ENCODE measurements at regions of chr7 and their contacts with region 1.

Region 1: DNA sequence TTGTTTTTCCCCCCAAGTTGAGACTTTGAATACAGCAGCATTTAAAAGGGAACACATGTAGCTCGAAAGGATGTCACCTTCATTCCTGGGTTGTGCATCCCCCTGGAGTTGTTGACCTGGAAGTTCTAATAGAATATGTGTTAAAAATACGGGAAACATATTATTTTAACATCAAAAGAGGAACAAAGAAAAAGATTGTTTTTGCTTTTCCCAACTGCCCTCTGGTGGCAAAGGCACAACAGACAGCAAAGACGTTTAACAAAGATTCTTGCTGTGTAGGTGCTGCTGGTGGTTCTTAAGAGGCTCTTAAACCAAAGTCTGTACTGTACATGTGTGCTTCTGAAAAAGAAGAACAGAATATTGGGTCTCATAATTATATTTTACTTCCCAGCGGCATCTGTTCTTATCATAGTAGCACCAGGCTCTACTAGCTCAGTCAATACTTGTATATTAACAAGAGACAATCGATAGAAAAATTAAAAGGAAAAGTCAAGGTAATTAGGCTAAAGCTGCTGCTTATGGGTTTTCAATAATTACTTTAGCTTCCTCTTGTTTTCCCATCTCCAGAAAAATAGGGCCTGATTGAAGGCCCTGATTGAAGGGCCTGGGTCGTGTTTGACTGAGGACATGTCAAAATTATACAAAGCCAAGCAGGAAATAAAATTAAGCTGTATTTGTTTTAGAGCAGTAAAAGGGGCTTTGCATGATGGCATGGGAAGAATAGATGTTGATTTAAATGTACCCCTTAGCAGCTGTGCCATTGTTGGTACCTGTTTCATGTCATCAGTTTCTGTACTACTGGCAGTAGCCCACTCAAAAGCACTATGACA is 384.2 kb upstream of the LRGUK start:
- DNase-seq: peak; percentile 36
- H3K4me3 ChIP-seq: no peak overlapping the region
- H3K27ac ChIP-seq: peak overlapping the region; percentile 10 to 100; a peak in 3 of 4 replicates
- H3K4me1 ChIP-seq: peaks cover 14 to 80% of the 10 kb centered on the region in 2 experiments; a peak in 3 of 4 replicates
- H3K27me3 ChIP-seq: no peaks in the 10 kb centered on the region
- CTCF ChIP-seq: peak; percentile 95
- EP300 ChIP-seq: peak; percentile 49 to 89; a peak in 3 of 4 replicates
- RAD21 ChIP-seq: peak; percentile 95

Region 2: GRCh38 chr7:133668296-133669060 is 74.4 kb before region 1 on chr7:
- CTCF ChIA-PET with region 1: interaction called, 14 read pairs
- POLR2A ChIA-PET with region 1: no interaction called
- DNase-seq: no peak
- H3K4me3 ChIP-seq: no peak overlapping the region
- H3K27ac ChIP-seq: peak overlapping the region; percentile 39 to 94; a peak in 3 of 4 replicates
- H3K4me1 ChIP-seq: peaks cover 7 to 56% of the 10 kb centered on the region in 2 experiments; a peak in 3 of 4 replicates
- H3K27me3 ChIP-seq: no peaks in the 10 kb centered on the region
- CTCF ChIP-seq: no peak
- EP300 ChIP-seq: no peak
- RAD21 ChIP-seq: no peak

Region 3: GRCh38 chr7:133714654-133715053 is 28.3 kb before region 1 on chr7:
- CTCF ChIA-PET with region 1: interaction called, 19 read pairs
- POLR2A ChIA-PET with region 1: no interaction called
- DNase-seq: no peak
- H3K4me3 ChIP-seq: no peak overlapping the region
- H3K27ac ChIP-seq: no peak overlapping the region
- H3K4me1 ChIP-seq: peaks cover 0 to 4% of the 10 kb centered on the region in 2 experiments; a peak in 2 of 4 replicates
- H3K27me3 ChIP-seq: no peaks in the 10 kb centered on the region
- CTCF ChIP-seq: no peak
- EP300 ChIP-seq: no peak
- RAD21 ChIP-seq: no peak

Region 4: DNA sequence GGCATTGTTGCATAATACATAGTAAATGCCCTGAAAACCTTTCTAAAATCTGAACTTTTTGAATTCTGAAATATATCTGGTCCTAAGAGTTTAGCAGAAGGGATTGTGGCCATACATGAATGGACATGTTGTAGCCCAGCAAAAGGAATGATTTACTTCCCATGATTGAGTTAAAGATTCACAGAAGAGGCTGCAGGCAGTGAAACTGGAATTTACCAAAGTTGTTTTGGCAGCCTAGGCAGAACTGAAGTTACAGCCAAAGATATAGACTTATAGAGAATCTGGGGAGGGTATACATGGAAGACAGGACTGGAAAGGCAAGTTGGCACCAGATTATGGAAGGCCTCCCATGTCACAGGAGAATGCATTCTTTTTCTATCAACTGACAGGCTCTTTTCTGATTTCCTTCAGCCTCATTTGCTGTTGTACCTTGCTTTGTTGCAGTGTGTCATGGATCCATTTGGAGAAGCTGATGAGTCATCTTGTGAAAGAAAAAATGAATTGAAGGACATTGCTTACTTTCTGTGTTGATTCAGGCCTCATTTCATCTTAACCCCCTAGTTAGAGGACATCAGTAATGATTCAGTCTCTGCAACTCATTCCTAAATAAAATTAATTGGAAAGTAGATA is 28.1 kb after region 1 on chr7:
- CTCF ChIA-PET with region 1: interaction called, 37 read pairs
- POLR2A ChIA-PET with region 1: interaction called, 16 read pairs
- DNase-seq: no peak
- H3K4me3 ChIP-seq: no peak overlapping the region
- H3K27ac ChIP-seq: peak overlapping the region; percentile 67 to 100
- H3K4me1 ChIP-seq: peaks cover 12 to 74% of the 10 kb centered on the region in 2 experiments
- H3K27me3 ChIP-seq: no peaks in the 10 kb centered on the region
- CTCF ChIP-seq: no peak
- EP300 ChIP-seq: no peak
- RAD21 ChIP-seq: no peak

Region 5: GRCh38 chr7:133804127-133804526 is 61.2 kb after region 1 on chr7:
- CTCF ChIA-PET with region 1: interaction called, 80 read pairs
- POLR2A ChIA-PET with region 1: interaction called, 13 read pairs
- DNase-seq: no peak
- H3K4me3 ChIP-seq: no peak overlapping the region
- H3K27ac ChIP-seq: peak overlapping the region in 1 of 2 experiments; percentile 100; a peak in 2 of 4 replicates
- H3K4me1 ChIP-seq: peaks cover 0 to 45% of the 10 kb centered on the region in 2 experiments; a peak in 2 of 4 replicates
- H3K27me3 ChIP-seq: no peaks in the 10 kb centered on the region
- CTCF ChIP-seq: no peak
- EP300 ChIP-seq: no peak
- RAD21 ChIP-seq: no peak

Region 6: GRCh38 chr7:133983685-133984419 is 240.9 kb after region 1 on chr7:
- CTCF ChIA-PET with region 1: interaction called, 15 read pairs
- POLR2A ChIA-PET with region 1: no interaction called
- DNase-seq: peak; percentile 72
- H3K4me3 ChIP-seq: no peak overlapping the region
- H3K27ac ChIP-seq: peak overlapping the region in 1 of 2 experiments; percentile 100; a peak in 2 of 4 replicates
- H3K4me1 ChIP-seq: peaks cover 0 to 29% of the 10 kb centered on the region in 2 experiments; a peak in 2 of 4 replicates
- H3K27me3 ChIP-seq: no peaks in the 10 kb centered on the region
- CTCF ChIP-seq: no peak
- EP300 ChIP-seq: peak in 1 of 2 experiments; percentile 72; a peak in 2 of 4 replicates
- RAD21 ChIP-seq: peak; percentile 63

Region 7: GRCh38 chr7:133997463-133997862 is 254.5 kb after region 1 on chr7:
- CTCF ChIA-PET with region 1: no interaction called
- POLR2A ChIA-PET with region 1: no interaction called
- DNase-seq: no peak
- H3K4me3 ChIP-seq: no peak overlapping the region
- H3K27ac ChIP-seq: peak overlapping the region in 1 of 2 experiments; percentile 51; a peak in 2 of 4 replicates
- H3K4me1 ChIP-seq: peaks cover 0 to 8% of the 10 kb centered on the region in 2 experiments; a peak in 1 of 4 replicates
- H3K27me3 ChIP-seq: no peaks in the 10 kb centered on the region
- CTCF ChIP-seq: no peak
- EP300 ChIP-seq: no peak
- RAD21 ChIP-seq: no peak

Region 8: DNA sequence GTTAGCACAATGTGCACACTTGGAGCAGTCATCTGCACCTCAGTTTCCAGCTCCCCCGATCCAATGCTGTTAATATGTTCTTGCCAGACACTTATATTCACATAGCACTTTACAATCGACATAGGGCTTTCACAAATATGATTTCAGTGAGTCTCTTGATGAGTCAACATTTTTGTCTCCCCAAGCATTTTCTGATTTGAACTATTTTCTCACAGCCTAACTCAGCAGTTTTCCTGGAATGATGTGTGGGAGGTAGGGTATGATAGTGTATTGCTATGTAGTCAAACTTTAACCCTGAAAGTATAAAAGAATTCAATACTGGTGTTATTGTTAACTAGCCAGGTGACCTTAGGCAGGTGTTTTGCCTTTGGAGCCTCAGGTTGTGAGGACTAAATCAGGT is 301.8 kb after region 1 on chr7:
- CTCF ChIA-PET with region 1: no interaction called
- POLR2A ChIA-PET with region 1: no interaction called
- DNase-seq: no peak
- H3K4me3 ChIP-seq: no peak overlapping the region
- H3K27ac ChIP-seq: no peak overlapping the region
- H3K4me1 ChIP-seq: peaks cover 0 to 29% of the 10 kb centered on the region in 2 experiments; a peak in 2 of 4 replicates
- H3K27me3 ChIP-seq: no peaks in the 10 kb centered on the region
- CTCF ChIP-seq: no peak
- EP300 ChIP-seq: no peak
- RAD21 ChIP-seq: no peak

Measured in SK-N-SH (cell line).